K562 (cell line): ENCODE measurements at regions of chr12 and their contacts with region 1.

Region 1: GRCh38 chr12:29427964-29428363 is 47.0 kb upstream of the ERGIC2 start:
- DNase-seq: peak; percentile 17 to 49 (median 36)
- ATAC-seq: peak; percentile 97
- H3K4me3 ChIP-seq: no peak overlapping the region
- H3K27ac ChIP-seq: no peak overlapping the region; the same call in 2 of the 3 replicates
- H3K4me1 ChIP-seq: no peaks in the 10 kb centered on the region
- H3K27me3 ChIP-seq: no peaks in the 10 kb centered on the region
- CTCF ChIP-seq: peak; percentile 45 to 65 (median 59); a peak in 5 of 6 replicates
- EP300 ChIP-seq: no peak
- POLR2A ChIP-seq: no peak
- RAD21 ChIP-seq: peak; percentile 54

Region 2: DNA sequence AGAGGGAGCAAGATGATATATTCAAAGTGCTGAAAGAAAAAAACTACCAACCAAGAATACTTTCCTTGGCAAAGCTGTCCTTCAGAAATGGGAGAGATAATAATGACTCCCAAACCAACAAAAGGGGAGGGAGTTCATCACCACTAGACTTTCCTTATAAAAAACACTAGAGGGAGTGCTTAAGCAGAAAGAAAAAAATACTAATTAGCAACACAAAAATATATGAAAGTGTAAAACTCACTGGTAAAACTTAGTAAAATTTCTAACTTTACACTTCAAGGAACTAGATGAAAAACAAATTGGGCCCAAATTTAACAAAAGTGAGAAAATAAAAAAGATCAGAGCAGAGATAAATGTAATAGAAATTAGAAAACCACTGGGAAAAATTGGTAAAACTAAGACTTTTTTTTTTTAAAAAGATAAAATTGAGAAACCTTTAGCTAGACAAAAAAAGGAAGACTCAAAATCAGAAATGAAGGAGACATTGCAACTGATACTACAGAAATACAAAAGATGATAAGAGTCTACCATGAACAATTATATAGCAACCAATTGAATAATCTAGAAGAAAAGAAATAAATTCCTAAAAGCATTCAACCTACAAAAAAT is 339.2 kb before region 1 on chr12:
- CTCF ChIA-PET with region 1: no interaction called
- POLR2A ChIA-PET with region 1: interaction called, 3 read pairs
- in situ Hi-C with region 1: no loop called
- intact Hi-C with region 1: loop called (anchors 10 kb)
- DNase-seq: peak in 2 of 4 experiments; percentile 4 to 7
- ATAC-seq: no peak
- H3K4me3 ChIP-seq: no peak overlapping the region
- H3K27ac ChIP-seq: no peak overlapping the region
- H3K4me1 ChIP-seq: no peaks in the 10 kb centered on the region
- H3K27me3 ChIP-seq: no peaks in the 10 kb centered on the region
- CTCF ChIP-seq: peak; percentile 9 to 54 (median 23); a peak in 3 of 6 replicates
- EP300 ChIP-seq: no peak
- POLR2A ChIP-seq: no peak
- RAD21 ChIP-seq: peak; percentile 44 to 64

Region 3: DNA sequence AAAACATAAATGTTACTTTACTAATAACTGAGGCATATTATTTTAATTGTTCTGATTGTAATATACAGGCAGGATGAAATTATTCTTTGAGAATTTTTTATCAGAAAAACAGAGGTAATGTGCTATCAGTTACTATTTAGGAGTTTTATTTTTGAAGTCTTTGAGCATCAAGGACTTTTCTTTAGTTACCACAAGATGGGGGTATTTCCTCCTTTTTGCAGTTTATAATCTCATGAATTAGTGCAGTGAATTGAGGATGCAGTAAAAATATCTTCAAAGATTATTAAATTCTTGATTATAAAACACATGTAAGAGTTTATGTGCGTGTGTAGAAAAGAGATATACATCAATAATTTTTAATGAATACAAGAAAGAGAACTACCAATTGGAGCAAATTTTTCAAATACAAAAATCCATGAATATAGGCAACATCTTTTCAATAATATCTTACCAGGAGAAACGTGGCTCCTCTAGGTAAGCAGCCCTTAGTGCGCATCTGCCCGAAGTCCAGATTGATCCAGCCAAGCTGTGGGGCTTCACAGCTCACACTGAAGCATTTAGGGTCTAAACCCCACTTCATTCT is 118.6 kb before region 1 on chr12:
- CTCF ChIA-PET with region 1: no interaction called
- POLR2A ChIA-PET with region 1: no interaction called
- in situ Hi-C with region 1: no loop called
- intact Hi-C with region 1: loop called (anchors 5 kb)
- DNase-seq: peak in 2 of 4 experiments; percentile 8 to 11
- ATAC-seq: no peak
- H3K4me3 ChIP-seq: no peak overlapping the region
- H3K27ac ChIP-seq: no peak overlapping the region
- H3K4me1 ChIP-seq: no peaks in the 10 kb centered on the region
- H3K27me3 ChIP-seq: no peaks in the 10 kb centered on the region
- CTCF ChIP-seq: peak; percentile 15 to 49 (median 19); a peak in 3 of 6 replicates
- EP300 ChIP-seq: no peak
- POLR2A ChIP-seq: no peak
- RAD21 ChIP-seq: peak; percentile 63 to 66

Region 4: GRCh38 chr12:29534935-29535334 is 107.0 kb after region 1 on chr12:
- CTCF ChIA-PET with region 1: no interaction called
- POLR2A ChIA-PET with region 1: no interaction called
- in situ Hi-C with region 1: no loop called
- intact Hi-C with region 1: no loop called
- DNase-seq: no peak
- ATAC-seq: no peak
- H3K4me3 ChIP-seq: no peak overlapping the region
- H3K27ac ChIP-seq: no peak overlapping the region
- H3K4me1 ChIP-seq: no peaks in the 10 kb centered on the region
- H3K27me3 ChIP-seq: no peaks in the 10 kb centered on the region
- CTCF ChIP-seq: no peak
- EP300 ChIP-seq: no peak
- POLR2A ChIP-seq: no peak
- RAD21 ChIP-seq: no peak